ENCODE measurements at regions of chr15 and their contacts with region 1.

Region 1: GRCh38 chr15:51094606-51095569 is at the start of gene TNFAIP8L3:
- DNase-seq: peak; percentile 62 to 66
- H3K4me3 ChIP-seq: peak within 1 kb of the TSS; percentile 57 to 88
- H3K27ac ChIP-seq: peak within 1 kb of the TSS; percentile 92 to 98
- H3K4me1 ChIP-seq: peaks cover 4 to 5% of the 10 kb centered on the region in 2 donors
- H3K27me3 ChIP-seq: no peaks in the 10 kb centered on the region
- CTCF ChIP-seq: no peak
- POLR2A ChIP-seq: peak in 1 of 2 donors; percentile 40
- total RNA-seq, gene TNFAIP8L3: 20.0 to 173 (median 43.2) TPM

Region 2: DNA sequence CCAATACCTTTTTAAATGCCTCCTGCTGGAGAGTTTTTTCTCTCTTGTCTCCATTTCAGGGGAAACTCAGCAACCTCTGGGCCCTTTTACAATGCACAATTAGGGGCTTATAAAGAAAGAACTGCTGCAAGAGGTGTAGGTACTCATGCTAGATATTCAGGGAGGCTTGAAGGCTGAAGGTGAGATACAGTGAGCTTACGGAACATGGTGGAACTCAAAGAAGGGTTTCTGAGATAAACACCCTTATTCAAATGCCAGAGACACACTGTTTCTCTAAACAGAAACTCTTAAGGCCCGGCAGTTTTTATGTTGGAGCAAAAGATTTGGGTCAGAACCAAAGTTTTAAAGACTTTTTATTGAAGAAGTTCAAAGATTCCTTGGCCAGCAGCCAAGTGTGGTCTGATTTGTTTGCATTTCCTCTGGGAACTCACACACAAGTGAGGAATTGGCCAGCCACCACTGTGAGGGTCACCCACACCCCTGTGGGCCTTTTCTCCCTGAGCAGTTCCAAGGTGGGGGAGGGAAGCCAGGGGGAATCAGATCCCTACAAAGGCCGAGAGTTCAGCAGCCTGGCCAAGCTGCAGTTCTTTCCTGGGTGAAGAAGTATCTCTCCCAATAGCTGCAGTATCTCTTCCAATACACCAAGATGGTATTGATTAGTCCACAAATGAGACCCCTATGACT is 47.9 kb before region 1 on chr15:
- intact Hi-C with region 1: loop called (anchors 5 kb)
- DNase-seq: peak; percentile 50 to 62
- H3K4me3 ChIP-seq: no peak overlapping the region
- H3K27ac ChIP-seq: peak overlapping the region; percentile 62 to 78
- H3K4me1 ChIP-seq: peaks cover 0 to 10% of the 10 kb centered on the region in 2 donors
- H3K27me3 ChIP-seq: no peaks in the 10 kb centered on the region
- CTCF ChIP-seq: no peak
- POLR2A ChIP-seq: no peak

Measured in uterus (tissue), 4 donors.